ENCODE measurements at regions of chr5 and their contacts with region 1.

Region 1: DNA sequence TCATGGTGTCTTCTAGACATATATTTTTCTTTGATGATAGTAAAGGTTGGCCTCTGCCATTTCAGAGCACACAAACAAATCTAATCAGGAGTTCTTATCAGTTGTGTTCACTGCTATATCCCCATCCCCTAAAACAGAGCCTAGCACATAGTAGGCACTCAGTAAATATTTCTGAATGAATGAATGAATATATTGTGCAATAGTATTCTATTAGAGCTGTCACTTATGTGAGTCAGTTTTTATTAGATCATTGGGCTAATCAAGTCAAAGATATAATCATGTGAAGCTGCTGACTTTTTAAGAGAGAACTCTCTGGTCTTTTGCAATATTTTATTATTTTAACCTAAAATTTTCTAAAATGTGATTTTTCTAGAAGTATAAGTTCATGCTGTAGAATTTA is 84.2 kb downstream of the CHSY3 start:
- DNase-seq: no peak
- ATAC-seq: no peak
- H3K4me3 ChIP-seq: no peak overlapping the region
- H3K27ac ChIP-seq: no peak overlapping the region
- H3K4me1 ChIP-seq: no peaks in the 10 kb centered on the region
- H3K27me3 ChIP-seq: no peaks in the 10 kb centered on the region

Region 2: GRCh38 chr5:129930221-129930620 is 58.2 kb before region 1 on chr5:
- intact Hi-C with region 1: no loop called
- DNase-seq: no peak
- ATAC-seq: no peak
- H3K4me3 ChIP-seq: no peak overlapping the region
- H3K27ac ChIP-seq: no peak overlapping the region
- H3K4me1 ChIP-seq: no peaks in the 10 kb centered on the region
- H3K27me3 ChIP-seq: no peaks in the 10 kb centered on the region

Region 3: GRCh38 chr5:130074820-130075219 is 86.4 kb after region 1 on chr5:
- intact Hi-C with region 1: loop called in 1 of 4 experiments (anchors 5 kb)
- DNase-seq: no peak
- ATAC-seq: no peak
- H3K4me3 ChIP-seq: no peak overlapping the region
- H3K27ac ChIP-seq: no peak overlapping the region
- H3K4me1 ChIP-seq: no peaks in the 10 kb centered on the region
- H3K27me3 ChIP-seq: no peaks in the 10 kb centered on the region